ENCODE measurements at regions of chr3 and their contacts with region 1.

Region 1: DNA sequence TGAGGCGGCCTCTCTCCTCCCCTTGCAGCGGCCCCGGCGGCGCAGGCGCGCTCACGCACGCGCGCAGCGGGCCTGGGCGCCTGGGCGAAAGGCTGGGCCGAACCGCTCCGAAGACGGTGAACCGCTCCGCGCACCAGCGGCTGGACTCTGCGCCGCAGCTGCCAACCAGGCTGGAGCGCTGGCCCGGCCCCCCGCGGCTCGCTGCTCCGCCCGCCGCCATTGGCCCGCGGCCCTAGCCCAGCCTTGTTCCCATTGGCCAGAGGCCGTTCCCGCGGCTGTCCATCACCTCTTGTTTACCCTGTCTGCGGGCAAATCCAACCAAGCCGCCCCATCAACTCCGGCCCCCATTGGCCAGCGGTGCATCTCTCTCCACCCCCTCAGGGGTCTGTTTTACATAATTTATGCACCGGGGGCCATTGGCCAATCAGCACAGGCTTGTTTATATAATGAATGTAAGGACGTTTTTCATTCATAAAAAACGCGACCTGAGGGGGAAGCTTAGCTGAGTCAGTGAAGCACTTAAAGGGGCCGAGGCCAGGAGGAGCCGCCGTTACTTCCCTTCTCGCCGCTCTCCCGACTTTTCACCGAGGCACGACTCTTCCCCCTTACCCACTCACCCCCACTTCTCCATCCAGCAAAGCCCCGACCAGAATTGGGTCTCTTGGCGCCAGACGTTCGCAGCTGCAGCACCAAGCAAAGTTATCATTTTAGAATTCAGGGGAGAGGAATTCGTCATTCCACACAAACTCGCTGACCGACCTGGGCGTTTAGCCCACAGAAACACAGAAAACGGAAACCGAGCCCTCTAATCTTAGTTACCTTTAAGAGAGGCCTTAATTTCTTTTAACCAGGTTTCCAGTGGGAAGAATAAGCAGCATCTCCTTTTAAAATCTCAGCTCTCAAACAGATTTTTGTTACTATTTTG is at the start of gene ETV5:
- DNase-seq: peak; percentile 96
- H3K4me3 Mint-ChIP-seq: peak within 1 kb of the TSS; percentile 67
- H3K27ac Mint-ChIP-seq: no peak within 1 kb of the TSS
- H3K4me1 Mint-ChIP-seq: peaks cover 42% of the 10 kb centered on the region
- H3K27me3 Mint-ChIP-seq: peaks cover 77% of the 10 kb centered on the region
- total RNA-seq, gene ETV5: 0.74 to 1.3 TPM

Region 2: DNA sequence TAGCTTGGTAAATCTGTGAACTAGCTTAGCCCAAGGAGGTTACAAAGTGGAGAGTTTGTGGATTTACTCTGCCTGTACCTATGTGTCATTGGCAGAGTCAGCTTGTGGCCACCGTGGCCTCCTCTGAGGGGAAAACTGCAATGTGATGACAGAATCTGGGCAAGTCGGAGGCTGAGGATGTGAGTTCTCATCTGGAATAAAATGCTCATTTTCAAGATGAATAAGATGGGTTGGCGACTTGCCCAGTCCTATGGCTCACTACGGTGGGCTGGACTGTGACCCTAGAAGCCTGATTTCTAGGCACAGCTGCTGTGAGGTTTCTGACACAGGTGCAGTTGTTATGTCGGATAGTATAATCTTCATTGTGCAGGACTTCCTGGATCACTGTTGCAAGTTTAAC is 84.0 kb before region 1 on chr3:
- CTCF ChIA-PET with region 1: no interaction called
- POLR2A ChIA-PET with region 1: no interaction called
- intact Hi-C with region 1: loop called (anchors 1 kb)
- DNase-seq: peak; percentile 74
- H3K4me3 Mint-ChIP-seq: no peak overlapping the region
- H3K27ac Mint-ChIP-seq: no peak overlapping the region
- H3K4me1 Mint-ChIP-seq: peaks cover 8% of the 10 kb centered on the region
- H3K27me3 Mint-ChIP-seq: peaks cover 12% of the 10 kb centered on the region

Region 3: DNA sequence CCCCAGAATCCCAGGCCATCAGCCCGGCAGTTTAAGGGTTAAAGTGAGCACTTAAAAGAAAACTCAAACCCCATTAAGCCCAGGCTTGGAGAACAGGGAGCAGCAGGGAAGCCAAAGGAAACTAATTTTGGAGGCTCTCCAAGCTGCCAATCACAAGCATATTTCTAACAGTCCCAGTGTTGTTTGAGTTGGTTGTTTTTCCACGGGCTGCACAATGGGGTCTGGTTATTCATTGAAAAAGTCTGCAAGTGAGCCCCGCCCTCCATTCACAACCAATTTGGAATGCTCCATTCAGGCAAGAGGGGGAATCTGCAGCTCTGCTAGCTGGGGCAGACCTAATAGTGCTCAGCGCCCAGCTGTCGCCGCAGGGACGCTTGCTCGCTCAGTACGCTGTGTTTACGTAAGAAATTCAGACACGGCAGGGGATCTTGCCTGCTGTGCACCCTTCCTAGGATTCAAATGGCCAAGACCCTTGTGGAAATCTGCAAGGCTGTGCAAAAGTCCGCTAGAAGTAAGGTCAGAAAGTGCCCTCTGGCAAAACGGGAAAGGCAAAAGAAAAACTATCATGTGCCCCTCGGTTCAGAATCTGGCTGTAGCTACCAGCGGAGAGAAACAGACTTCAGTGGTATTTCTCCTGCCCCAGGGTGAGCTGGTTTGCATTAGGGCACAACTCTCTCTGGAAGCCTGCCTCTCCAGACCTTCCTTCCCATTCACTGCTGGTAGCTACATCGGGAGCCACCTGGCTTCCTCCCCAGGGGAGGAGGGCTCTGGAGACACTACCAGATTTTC is 11.3 kb before region 1 on chr3:
- CTCF ChIA-PET with region 1: no interaction called
- POLR2A ChIA-PET with region 1: no interaction called
- intact Hi-C with region 1: no loop called
- DNase-seq: no peak
- H3K4me3 Mint-ChIP-seq: no peak overlapping the region
- H3K27ac Mint-ChIP-seq: no peak overlapping the region
- H3K4me1 Mint-ChIP-seq: no peaks in the 10 kb centered on the region
- H3K27me3 Mint-ChIP-seq: peaks cover 67% of the 10 kb centered on the region

Region 4: DNA sequence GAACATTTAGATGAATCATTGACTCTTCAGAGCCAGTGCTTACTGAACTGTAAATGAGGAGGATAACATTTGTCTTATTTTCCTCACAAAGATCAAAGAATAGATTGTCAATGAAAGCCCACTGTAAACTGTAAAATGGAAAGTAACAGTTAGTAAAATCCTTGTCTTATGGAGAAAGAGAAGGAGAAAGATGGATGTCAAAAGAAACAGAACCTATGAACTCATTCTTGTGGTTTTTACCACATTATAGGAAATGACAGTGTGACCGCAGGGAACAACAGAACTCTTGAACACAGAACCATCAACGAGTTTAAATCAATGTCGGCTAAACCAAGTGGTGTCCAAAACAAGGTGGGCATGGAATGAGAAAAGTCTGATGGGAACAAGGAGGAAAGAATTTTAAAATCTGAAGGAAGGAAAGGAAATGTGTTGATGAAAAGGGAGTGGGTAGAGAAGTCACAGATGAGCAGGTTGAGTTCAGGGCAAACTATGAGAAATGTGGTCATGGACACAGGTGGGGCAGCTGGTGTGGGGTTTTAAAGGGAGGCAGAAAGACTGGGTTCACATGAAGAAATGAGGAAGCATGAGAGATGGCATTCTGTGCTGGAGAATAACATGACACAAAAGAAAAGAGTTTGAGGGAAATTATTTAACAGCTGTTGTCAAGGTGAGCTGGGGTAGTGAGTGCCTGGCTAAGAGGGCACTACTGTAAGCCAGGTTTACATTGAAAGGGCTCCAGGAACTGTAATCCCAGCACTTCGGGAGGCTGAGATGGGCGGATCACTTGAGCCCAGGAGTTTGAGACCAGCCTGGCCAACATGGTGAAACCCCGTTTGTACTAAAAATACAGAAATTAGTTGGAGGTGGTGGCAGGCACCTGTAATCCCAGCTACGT is 42.1 kb after region 1 on chr3:
- CTCF ChIA-PET with region 1: no interaction called
- POLR2A ChIA-PET with region 1: no interaction called
- intact Hi-C with region 1: loop called (anchors 1 kb)
- DNase-seq: no peak
- H3K4me3 Mint-ChIP-seq: no peak overlapping the region
- H3K27ac Mint-ChIP-seq: no peak overlapping the region
- H3K4me1 Mint-ChIP-seq: peaks cover 13% of the 10 kb centered on the region
- H3K27me3 Mint-ChIP-seq: peaks cover 43% of the 10 kb centered on the region

Region 5: DNA sequence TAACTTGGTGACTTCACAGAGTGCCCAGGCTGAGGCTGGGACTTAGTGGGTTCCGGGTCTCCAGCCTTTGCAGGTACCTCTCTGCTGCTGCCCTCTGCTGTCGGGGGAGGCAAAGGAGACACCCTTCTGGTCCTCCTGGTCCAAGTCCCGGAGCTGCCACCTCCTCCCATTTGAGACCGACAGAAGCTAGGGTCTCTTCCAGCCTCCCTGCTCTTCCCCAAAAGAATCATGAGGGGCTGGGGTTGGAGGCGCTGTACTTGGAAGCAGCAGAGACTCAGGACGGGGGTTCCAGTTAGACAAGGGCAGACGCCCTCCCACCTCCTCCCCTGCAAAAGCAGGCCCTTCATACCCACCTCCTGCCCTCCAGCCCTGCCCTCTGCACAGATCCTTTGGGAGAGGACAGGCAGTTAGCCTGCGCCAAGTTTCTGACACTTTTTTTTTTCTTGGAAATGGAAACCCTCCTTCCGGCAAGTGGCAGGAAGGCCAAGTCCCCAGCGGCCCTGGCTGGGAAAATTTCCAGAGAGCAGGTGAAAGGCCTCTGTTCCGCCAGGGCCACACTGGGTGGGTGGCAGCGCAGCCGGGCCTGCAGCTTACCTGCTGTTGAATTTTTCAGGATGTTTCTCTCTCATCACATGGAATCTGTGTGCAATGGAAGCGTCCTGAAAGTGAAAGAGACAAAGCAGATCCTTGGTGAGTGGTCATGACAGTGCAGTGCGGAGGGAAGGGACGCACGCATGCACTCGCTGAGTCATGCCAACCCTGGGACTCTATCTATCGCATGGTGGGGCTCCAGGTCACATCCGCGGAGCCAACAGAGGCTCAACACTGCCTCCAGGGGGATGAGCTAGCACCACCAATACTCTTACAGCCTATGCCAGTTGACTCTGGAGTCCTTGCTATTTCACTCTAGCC is 133.0 kb after region 1 on chr3:
- CTCF ChIA-PET with region 1: no interaction called
- POLR2A ChIA-PET with region 1: no interaction called
- intact Hi-C with region 1: loop called (anchors 1 kb)
- DNase-seq: peak; percentile 82
- H3K4me3 Mint-ChIP-seq: no peak overlapping the region
- H3K27ac Mint-ChIP-seq: no peak overlapping the region
- H3K4me1 Mint-ChIP-seq: peaks cover 7% of the 10 kb centered on the region
- H3K27me3 Mint-ChIP-seq: peaks cover 22% of the 10 kb centered on the region

Region 6: DNA sequence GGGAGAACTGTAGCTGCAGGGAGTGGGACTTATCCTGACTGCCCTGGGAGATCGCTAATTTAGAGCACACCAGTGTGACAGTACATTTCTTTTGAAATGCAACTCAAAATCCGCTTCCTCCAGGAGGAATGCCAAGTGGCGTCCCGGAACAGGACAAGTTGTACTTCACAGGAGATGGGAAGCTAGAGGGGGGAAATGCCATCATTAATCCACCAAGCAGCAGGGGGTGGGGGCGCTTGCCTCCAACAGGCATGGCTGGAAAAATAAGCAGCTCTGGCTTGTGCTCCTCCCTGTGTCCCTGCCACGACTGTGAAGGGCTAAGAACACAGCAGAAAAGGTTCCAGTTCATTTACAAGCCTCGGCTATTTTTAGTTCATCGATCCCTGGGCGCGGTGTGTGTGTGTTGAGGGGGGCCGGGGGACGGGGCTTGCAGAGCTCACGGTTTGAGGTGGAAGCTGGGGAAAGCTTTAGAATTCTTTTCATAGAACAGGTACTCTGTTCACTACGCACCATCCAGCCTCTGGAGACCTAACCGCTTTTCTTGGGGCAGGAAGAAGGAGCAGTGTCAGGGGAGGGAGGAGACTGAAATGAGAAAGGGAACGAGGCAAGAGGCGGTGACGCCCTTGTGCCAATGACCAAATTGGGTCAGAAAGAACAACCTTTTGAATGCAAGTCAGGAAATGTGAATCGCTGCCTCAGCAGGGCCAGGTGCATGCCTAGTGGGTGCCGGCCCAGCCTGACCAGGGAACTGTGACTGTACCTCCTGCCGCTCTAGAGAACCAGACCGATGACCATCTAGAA is 304.6 kb after region 1 on chr3:
- CTCF ChIA-PET with region 1: no interaction called
- POLR2A ChIA-PET with region 1: no interaction called
- intact Hi-C with region 1: loop called (anchors 5 kb)
- DNase-seq: peak; percentile 61
- H3K4me3 Mint-ChIP-seq: peak overlapping the region; percentile 55
- H3K27ac Mint-ChIP-seq: no peak overlapping the region
- H3K4me1 Mint-ChIP-seq: peaks cover 45% of the 10 kb centered on the region
- H3K27me3 Mint-ChIP-seq: no peaks in the 10 kb centered on the region

Region 7: GRCh38 chr3:186540221-186540834 is 431.1 kb after region 1 on chr3:
- CTCF ChIA-PET with region 1: interaction called, 6 read pairs
- POLR2A ChIA-PET with region 1: no interaction called
- intact Hi-C with region 1: loop called (anchors 2 kb)
- DNase-seq: peak; percentile 90
- H3K4me3 Mint-ChIP-seq: no peak overlapping the region
- H3K27ac Mint-ChIP-seq: peak overlapping the region; percentile 25
- H3K4me1 Mint-ChIP-seq: peaks cover 57% of the 10 kb centered on the region
- H3K27me3 Mint-ChIP-seq: no peaks in the 10 kb centered on the region

Measured in activated CD4-positive, alpha-beta memory T cell treated with anti-CD3 and anti-CD28 coated beads for 36 hours (primary cell).